MCF 10A (cell line): ENCODE measurements at regions of chr9 and their contacts with region 1.

Region 1: DNA sequence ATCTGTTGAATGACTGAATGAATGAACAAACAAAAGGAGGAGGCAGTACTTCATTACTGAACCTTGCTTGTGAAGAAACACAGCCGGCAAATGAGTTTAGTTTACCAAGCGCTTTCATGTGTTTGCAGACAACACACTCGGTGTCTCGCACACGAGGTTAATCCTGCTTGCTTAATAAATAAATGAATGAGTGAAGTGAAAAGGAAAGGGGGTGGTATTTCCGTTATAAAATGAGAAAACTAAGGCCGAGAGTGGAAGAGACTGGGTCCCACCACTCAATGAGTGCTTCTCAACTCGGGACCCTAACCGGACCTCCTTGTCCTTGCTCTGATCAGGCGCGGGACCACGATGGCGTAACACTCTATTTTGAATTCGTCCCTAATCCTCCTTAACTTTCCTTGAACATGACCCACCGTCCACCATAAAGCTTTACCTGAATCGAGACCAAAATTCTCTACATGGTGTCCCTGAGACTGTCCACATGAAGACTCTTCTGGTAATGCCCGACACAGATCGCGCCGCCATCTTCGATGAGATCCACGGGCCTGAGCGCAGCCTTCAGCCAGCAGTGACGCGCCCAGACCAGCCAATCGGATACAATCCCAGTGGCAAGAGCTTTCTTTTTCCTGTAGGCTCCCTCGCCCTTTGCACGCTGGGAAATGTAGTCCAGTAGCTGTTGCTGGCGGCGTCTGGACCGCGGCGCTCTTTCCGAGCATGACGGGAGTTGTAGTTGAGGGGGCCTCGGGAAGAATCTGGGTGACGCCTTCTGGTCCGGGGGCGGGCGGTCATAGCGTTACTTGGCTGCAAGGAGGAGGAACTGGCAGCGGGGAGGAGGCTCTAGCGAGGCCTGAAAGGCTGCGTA is at the starts of genes MRPL50 and ZNF189:
- DNase-seq: peak; percentile 99
- H3K4me3 Mint-ChIP-seq: peak within 1 kb of the TSS; percentile 97
- H3K27ac Mint-ChIP-seq: peak within 1 kb of the TSS; percentile 99
- H3K4me1 Mint-ChIP-seq: peaks cover 39% of the 10 kb centered on the region
- H3K27me3 Mint-ChIP-seq: no peaks in the 10 kb centered on the region
- CTCF ChIP-seq: no peak
- total RNA-seq, gene MRPL50: 15.4 and 16.9 TPM in 2 replicates
- total RNA-seq, gene ZNF189: 17.4 and 20.4 TPM in 2 replicates

Region 2: DNA sequence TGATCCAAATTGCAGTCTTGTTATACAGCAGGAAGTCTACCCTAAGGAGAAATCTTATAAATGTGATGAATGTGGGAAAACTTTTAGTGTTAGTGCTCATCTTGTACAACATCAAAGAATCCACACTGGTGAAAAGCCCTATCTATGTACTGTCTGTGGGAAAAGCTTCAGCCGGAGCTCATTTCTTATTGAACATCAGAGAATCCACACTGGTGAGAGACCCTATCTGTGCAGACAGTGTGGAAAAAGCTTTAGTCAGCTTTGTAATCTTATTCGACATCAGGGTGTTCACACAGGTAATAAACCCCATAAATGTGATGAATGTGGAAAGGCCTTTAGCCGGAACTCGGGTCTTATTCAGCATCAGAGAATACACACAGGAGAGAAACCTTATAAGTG is 10.8 kb after region 1 on chr9:
- CTCF ChIA-PET with region 1: interaction called, 4 read pairs
- POLR2A ChIA-PET with region 1: interaction called, 37 read pairs
- intact Hi-C with region 1: no loop called
- DNase-seq: no peak
- H3K4me3 Mint-ChIP-seq: no peak overlapping the region
- H3K27ac Mint-ChIP-seq: no peak overlapping the region
- H3K4me1 Mint-ChIP-seq: no peaks in the 10 kb centered on the region
- H3K27me3 Mint-ChIP-seq: no peaks in the 10 kb centered on the region
- CTCF ChIP-seq: no peak

Region 3: GRCh38 chr9:101427957-101428655 is 29.8 kb after region 1 on chr9:
- CTCF ChIA-PET with region 1: no interaction called
- POLR2A ChIA-PET with region 1: no interaction called
- intact Hi-C with region 1: no loop called
- DNase-seq: no peak
- H3K4me3 Mint-ChIP-seq: no peak overlapping the region
- H3K27ac Mint-ChIP-seq: no peak overlapping the region
- H3K4me1 Mint-ChIP-seq: no peaks in the 10 kb centered on the region
- H3K27me3 Mint-ChIP-seq: peaks cover 40% of the 10 kb centered on the region
- CTCF ChIP-seq: no peak

Region 4: DNA sequence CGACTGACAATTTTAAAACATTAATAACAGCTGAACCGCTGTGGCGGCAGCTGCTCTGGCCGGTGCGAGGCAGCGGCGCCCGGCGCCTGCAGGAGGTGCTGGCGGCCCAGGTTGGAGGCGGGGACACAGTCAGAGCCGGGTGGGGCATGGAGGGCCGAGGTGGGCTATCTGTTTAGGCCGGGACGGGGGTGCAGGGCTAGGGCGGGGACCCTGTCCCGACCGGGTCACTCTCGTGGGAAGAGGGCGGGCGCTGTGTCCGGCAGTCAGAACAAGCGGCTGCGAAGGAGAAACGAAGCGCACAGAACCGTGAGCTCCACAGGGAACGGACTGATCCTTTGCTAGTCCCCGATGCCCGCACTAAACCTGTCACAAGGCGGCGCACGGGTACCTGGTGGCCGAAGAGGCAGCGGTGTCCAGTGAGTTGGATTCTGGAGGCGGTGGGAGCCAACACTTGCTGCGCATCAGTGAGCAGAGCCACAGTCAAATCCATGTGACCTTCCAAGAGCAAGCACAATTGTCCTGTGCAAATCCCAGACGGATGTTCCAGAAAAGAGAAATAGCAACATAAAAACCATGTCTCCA is 50.9 kb after region 1 on chr9:
- CTCF ChIA-PET with region 1: interaction called, 5 read pairs
- POLR2A ChIA-PET with region 1: interaction called, 4 read pairs
- intact Hi-C with region 1: loop called (anchors 2 kb)
- DNase-seq: peak; percentile 75
- H3K4me3 Mint-ChIP-seq: peak overlapping the region; percentile 83
- H3K27ac Mint-ChIP-seq: no peak overlapping the region
- H3K4me1 Mint-ChIP-seq: peaks cover 19% of the 10 kb centered on the region
- H3K27me3 Mint-ChIP-seq: peaks cover 17% of the 10 kb centered on the region
- CTCF ChIP-seq: peak; percentile 64

Region 5: GRCh38 chr9:101479338-101480030 is 81.2 kb after region 1 on chr9:
- CTCF ChIA-PET with region 1: no interaction called
- POLR2A ChIA-PET with region 1: interaction called, 12 read pairs
- intact Hi-C with region 1: no loop called
- DNase-seq: peak; percentile 92
- H3K4me3 Mint-ChIP-seq: peak overlapping the region; percentile 44
- H3K27ac Mint-ChIP-seq: peak overlapping the region; percentile 60
- H3K4me1 Mint-ChIP-seq: peaks cover 68% of the 10 kb centered on the region
- H3K27me3 Mint-ChIP-seq: no peaks in the 10 kb centered on the region
- CTCF ChIP-seq: no peak

Region 6: GRCh38 chr9:101486693-101487442 is 88.6 kb after region 1 on chr9:
- CTCF ChIA-PET with region 1: no interaction called
- POLR2A ChIA-PET with region 1: interaction called, 12 read pairs
- intact Hi-C with region 1: no loop called
- DNase-seq: peak; percentile 71
- H3K4me3 Mint-ChIP-seq: peak overlapping the region; percentile 82
- H3K27ac Mint-ChIP-seq: peak overlapping the region; percentile 92
- H3K4me1 Mint-ChIP-seq: peaks cover 25% of the 10 kb centered on the region
- H3K27me3 Mint-ChIP-seq: no peaks in the 10 kb centered on the region
- CTCF ChIP-seq: peak; percentile 4

Region 7: DNA sequence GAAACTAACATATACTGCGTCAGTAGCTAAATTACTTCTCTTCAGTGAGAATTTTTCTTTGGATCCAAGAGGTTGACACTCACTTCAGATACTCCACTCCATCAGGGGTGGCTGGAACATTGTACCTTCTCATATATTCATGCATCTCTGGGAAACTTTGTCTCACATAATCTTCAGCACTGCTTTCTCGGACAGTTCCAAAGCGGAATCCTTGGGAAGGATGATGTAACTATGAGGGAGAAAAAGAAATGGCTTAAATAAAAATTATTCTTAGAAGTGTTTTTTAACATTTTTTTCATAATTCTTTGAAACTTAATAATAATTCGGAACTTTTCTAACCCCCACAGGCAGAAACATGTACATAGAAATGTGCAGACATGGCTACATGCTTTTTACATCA is 229.9 kb after region 1 on chr9:
- CTCF ChIA-PET with region 1: no interaction called
- POLR2A ChIA-PET with region 1: no interaction called
- intact Hi-C with region 1: no loop called
- DNase-seq: peak; percentile 54
- H3K4me3 Mint-ChIP-seq: no peak overlapping the region
- H3K27ac Mint-ChIP-seq: no peak overlapping the region
- H3K4me1 Mint-ChIP-seq: no peaks in the 10 kb centered on the region
- H3K27me3 Mint-ChIP-seq: peaks cover 15% of the 10 kb centered on the region
- CTCF ChIP-seq: no peak

Region 8: GRCh38 chr9:101787891-101788290 is 389.6 kb after region 1 on chr9:
- CTCF ChIA-PET with region 1: no interaction called
- POLR2A ChIA-PET with region 1: no interaction called
- intact Hi-C with region 1: no loop called
- DNase-seq: no peak
- H3K4me3 Mint-ChIP-seq: no peak overlapping the region
- H3K27ac Mint-ChIP-seq: no peak overlapping the region
- H3K4me1 Mint-ChIP-seq: no peaks in the 10 kb centered on the region
- H3K27me3 Mint-ChIP-seq: peaks cover 24% of the 10 kb centered on the region
- CTCF ChIP-seq: no peak

Region 9: GRCh38 chr9:101848485-101848919 is 450.2 kb after region 1 on chr9:
- CTCF ChIA-PET with region 1: no interaction called
- POLR2A ChIA-PET with region 1: no interaction called
- intact Hi-C with region 1: no loop called
- DNase-seq: peak; percentile 25
- H3K4me3 Mint-ChIP-seq: no peak overlapping the region
- H3K27ac Mint-ChIP-seq: peak overlapping the region; percentile 44
- H3K4me1 Mint-ChIP-seq: no peaks in the 10 kb centered on the region
- H3K27me3 Mint-ChIP-seq: peaks cover 45% of the 10 kb centered on the region
- CTCF ChIP-seq: no peak